ENCODE measurements at regions of chr5 and their contacts with region 1.

Region 1: DNA sequence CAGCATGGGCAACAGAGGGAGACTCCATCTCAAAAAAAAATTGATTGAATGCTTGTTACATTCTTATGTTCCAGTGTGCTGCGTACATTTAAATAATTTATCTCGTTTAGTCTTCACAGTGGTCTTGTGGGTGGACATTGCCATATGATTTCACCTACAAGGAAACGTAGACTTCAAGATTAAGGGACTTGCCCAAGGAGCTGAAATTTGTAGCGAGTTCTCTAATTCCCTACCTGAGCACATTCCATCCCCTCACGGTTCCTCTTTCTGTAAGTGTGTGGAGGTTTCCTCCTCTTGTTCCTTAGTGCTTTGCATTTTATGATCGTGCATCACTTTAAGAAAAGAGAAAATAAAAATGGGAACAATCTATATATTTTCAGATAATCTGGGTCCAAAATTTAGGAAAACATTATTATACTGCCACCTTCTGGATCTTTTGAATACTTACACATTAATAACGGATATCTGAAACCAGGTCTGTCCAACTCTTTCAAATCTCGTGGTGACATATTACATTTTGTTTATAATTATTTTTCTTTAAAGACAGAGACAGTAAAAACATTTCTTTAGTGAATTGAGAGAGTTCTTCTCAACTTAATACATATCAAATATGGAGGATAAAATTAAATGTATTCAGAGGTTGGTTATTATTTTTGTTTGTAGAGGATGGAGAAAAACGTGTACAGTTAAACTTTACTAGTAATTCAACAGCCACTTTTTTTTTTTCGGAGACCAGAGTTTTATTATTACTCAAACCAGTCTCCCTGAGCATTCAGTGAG is 29.9 kb upstream of the C7 start:
- DNase-seq: no peak
- H3K4me3 Mint-ChIP-seq: no peak overlapping the region
- H3K27ac Mint-ChIP-seq: no peak overlapping the region
- H3K4me1 Mint-ChIP-seq: peaks cover 4% of the 10 kb centered on the region
- H3K27me3 Mint-ChIP-seq: no peaks in the 10 kb centered on the region

Region 2: GRCh38 chr5:39578887-39579497 is 1300.4 kb before region 1 on chr5:
- CTCF ChIA-PET with region 1: no interaction called
- intact Hi-C with region 1: loop called (anchors 1 kb)
- DNase-seq: no peak
- H3K4me3 Mint-ChIP-seq: no peak overlapping the region
- H3K27ac Mint-ChIP-seq: no peak overlapping the region
- H3K4me1 Mint-ChIP-seq: peaks cover 8% of the 10 kb centered on the region
- H3K27me3 Mint-ChIP-seq: no peaks in the 10 kb centered on the region

Region 3: DNA sequence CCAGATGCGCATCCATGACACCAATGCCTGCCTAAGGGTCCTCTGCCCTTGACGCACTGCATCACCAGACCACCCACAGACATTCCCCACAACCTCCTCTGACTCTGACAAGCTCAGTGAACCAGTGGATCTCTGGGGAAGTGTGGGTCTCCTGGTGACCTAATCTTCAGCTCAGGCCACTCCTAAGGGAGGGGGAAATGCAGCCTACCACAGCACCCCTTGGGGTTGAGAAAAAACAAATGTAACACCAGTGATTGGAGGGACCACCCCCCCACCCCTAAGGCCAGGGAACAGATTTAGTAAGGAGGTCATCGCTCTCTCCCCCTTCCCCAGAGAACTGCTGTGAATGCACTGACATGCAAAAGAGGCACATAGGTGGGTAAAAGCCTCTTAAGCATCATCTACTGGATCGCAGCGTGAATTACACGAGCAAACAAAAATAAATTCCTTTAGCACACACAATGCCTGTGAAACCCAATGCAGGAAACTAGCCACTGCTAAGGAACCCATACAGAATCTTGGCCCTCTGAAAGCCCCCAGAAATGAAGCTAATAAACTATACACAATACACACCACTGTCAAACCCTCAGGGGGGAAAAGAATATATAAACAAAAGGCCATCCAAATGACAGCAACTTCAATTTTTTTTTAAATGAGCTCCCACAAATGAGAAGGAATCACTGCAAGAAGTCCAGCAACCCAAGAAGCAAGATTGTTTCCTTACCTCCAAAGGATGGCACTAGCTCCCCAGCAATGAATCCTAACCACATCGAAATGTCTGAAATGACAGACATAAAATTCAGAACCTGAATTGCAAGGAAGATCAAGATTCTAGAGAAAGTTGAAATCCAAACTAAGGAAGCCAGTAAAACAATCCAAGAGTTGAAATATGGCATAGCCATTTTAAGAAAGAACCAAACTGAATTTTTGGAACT is 713.3 kb before region 1 on chr5:
- CTCF ChIA-PET with region 1: no interaction called
- intact Hi-C with region 1: loop called (anchors 5 kb)
- DNase-seq: peak; percentile 61
- H3K4me3 Mint-ChIP-seq: no peak overlapping the region
- H3K27ac Mint-ChIP-seq: peak overlapping the region; percentile 14
- H3K4me1 Mint-ChIP-seq: peaks cover 9% of the 10 kb centered on the region
- H3K27me3 Mint-ChIP-seq: no peaks in the 10 kb centered on the region

Region 4: GRCh38 chr5:40736103-40736875 is 143.1 kb before region 1 on chr5:
- CTCF ChIA-PET with region 1: no interaction called
- intact Hi-C with region 1: loop called (anchors 5 kb)
- DNase-seq: no peak
- H3K4me3 Mint-ChIP-seq: no peak overlapping the region
- H3K27ac Mint-ChIP-seq: no peak overlapping the region
- H3K4me1 Mint-ChIP-seq: peaks cover 26% of the 10 kb centered on the region
- H3K27me3 Mint-ChIP-seq: no peaks in the 10 kb centered on the region

Region 5: DNA sequence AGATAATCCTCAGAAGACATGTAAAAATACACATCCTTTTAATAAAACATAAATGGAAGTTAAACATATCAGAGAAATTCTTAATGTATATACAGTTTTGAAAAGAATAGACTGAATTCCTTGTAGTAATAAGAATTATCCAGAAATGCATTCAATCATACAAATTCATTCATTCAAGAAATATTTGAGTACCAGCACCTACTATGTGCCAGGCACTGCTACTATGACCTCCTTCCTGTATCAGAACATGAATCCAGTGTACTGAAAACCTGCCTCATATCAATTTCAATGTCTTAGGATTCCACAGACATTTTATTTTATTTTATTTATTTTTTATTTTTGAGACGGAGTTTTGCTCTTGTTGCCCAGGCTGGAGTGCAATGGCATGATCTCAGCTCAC is 94.4 kb before region 1 on chr5:
- CTCF ChIA-PET with region 1: no interaction called
- intact Hi-C with region 1: no loop called
- DNase-seq: no peak
- H3K4me3 Mint-ChIP-seq: no peak overlapping the region
- H3K27ac Mint-ChIP-seq: no peak overlapping the region
- H3K4me1 Mint-ChIP-seq: peaks cover 45% of the 10 kb centered on the region
- H3K27me3 Mint-ChIP-seq: no peaks in the 10 kb centered on the region

Region 6: GRCh38 chr5:40798012-40798855 is 81.1 kb before region 1 on chr5 and contains the start of gene PRKAA1:
- CTCF ChIA-PET with region 1: no interaction called
- intact Hi-C with region 1: loop called (anchors 1 kb)
- DNase-seq: peak; percentile 85
- H3K4me3 Mint-ChIP-seq: peak within 1 kb of the TSS; percentile 88
- H3K27ac Mint-ChIP-seq: peak within 1 kb of the TSS; percentile 85
- H3K4me1 Mint-ChIP-seq: peaks cover 41% of the 10 kb centered on the region
- H3K27me3 Mint-ChIP-seq: peaks cover 2% of the 10 kb centered on the region
- total RNA-seq, gene PRKAA1: 52.6 to 58.6 TPM

Region 7: DNA sequence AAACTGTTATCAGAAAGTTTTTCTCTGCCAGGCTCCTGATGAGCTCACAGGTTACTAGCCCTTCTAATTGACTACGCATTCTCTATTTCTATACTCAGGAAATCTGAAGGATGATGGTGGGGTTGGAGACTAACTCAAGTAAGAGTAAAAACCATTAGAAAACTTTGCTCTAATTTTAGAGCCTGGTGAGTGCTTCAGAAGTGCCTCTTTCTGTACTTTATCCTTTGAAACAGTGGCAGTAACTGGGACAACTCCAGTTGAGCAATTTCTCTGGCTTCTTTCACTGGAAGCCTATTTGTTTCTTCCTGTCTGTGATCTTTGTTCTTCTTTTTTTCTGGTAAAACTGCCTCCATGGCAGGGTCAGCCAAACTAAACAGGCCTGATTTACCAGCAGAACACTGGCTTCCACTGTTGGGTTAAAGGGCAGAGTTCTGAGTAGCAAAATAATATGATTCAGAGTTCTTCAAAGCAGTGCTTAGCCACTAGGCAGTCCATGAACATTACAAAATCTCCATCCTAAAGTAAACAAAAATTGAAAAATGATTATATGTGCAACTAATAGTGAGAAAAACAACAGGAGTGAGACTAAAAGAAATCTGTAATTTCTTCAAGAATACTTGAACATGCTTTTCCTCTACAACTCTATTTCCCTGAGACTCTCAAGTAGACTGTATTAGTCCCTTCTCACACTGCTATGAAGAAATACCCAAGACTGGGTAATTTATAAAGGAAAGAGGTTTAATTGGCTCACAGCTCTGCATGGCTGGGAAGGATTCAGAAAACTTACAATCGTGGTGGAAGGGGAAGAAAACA is 112.0 kb after region 1 on chr5:
- CTCF ChIA-PET with region 1: no interaction called
- intact Hi-C with region 1: no loop called
- DNase-seq: no peak
- H3K4me3 Mint-ChIP-seq: no peak overlapping the region
- H3K27ac Mint-ChIP-seq: no peak overlapping the region
- H3K4me1 Mint-ChIP-seq: no peaks in the 10 kb centered on the region
- H3K27me3 Mint-ChIP-seq: no peaks in the 10 kb centered on the region

Region 8: GRCh38 chr5:41127967-41128690 is 248.8 kb after region 1 on chr5:
- CTCF ChIA-PET with region 1: no interaction called
- intact Hi-C with region 1: no loop called
- DNase-seq: no peak
- H3K4me3 Mint-ChIP-seq: no peak overlapping the region
- H3K27ac Mint-ChIP-seq: no peak overlapping the region
- H3K4me1 Mint-ChIP-seq: no peaks in the 10 kb centered on the region
- H3K27me3 Mint-ChIP-seq: no peaks in the 10 kb centered on the region

Measured in activated naive CD4-positive, alpha-beta T cell treated with anti-CD3 and anti-CD28 coated beads for 36 hours (primary cell).